ENCODE measurements at regions of chr1 and their contacts with region 1.

Region 1: GRCh38 chr1:214321705-214322453 is 40.9 kb downstream of the SMYD2 start:
- DNase-seq: no peak
- H3K4me3 Mint-ChIP-seq: no peak overlapping the region
- H3K27ac Mint-ChIP-seq: no peak overlapping the region
- H3K4me1 Mint-ChIP-seq: no peaks in the 10 kb centered on the region
- H3K27me3 Mint-ChIP-seq: no peaks in the 10 kb centered on the region
- CTCF ChIP-seq: no peak

Region 2: DNA sequence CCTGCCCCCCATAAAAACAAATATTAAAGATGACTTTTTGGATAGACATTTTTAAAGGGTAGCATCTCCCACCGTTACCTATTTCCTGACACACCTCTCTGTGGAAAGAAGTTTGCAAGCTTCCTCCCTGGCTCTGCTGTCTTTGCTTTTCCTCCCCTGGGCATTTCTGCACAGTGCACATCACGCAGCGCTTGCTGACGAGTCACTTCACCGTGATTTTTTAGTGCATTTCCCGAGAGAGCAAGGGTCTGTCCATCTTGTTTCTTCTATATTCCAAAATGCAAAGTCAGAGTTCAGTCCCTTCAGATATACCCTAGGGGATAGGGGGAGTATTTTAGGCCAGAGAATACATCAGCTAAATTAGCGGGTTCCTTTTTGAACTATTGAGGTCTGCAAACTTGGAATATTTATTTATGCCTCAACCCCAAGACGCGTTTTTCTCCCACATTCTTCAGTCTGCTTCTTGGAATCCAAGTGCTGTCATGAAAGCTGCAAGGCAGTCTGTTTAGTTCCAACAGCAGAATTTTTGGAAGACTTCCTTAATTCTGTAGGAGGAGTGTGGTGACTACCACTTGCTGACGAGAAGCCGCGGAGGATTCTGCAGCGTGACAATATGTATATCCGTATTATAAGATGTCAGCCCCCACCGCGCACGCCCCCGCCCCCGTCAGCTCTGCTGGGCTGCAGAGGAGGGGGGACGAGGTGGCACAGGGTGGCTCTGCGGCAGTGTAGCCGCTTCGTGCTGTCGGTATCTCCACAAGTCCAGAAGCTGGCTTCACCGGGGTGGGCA is 18.5 kb before region 1 on chr1:
- CTCF ChIA-PET with region 1: interaction called, 332 read pairs
- POLR2A ChIA-PET with region 1: interaction called, 6 read pairs
- intact Hi-C with region 1: no loop called
- DNase-seq: no peak
- H3K4me3 Mint-ChIP-seq: no peak overlapping the region
- H3K27ac Mint-ChIP-seq: no peak overlapping the region
- H3K4me1 Mint-ChIP-seq: no peaks in the 10 kb centered on the region
- H3K27me3 Mint-ChIP-seq: no peaks in the 10 kb centered on the region
- CTCF ChIP-seq: no peak

Measured in MCF 10A (cell line).